ENCODE measurements at regions of chr3 and their contacts with region 1.

Region 1: GRCh38 chr3:98556164-98557130 is 24.7 kb downstream of the GPR15 start:
- DNase-seq: peak; percentile 81
- H3K4me3 Mint-ChIP-seq: peak overlapping the region; percentile 83
- H3K27ac Mint-ChIP-seq: peak overlapping the region; percentile 98
- H3K4me1 Mint-ChIP-seq: peaks cover 94% of the 10 kb centered on the region
- H3K27me3 Mint-ChIP-seq: no peaks in the 10 kb centered on the region

Region 2: GRCh38 chr3:97981886-97982285 is 574.6 kb before region 1 on chr3:
- intact Hi-C with region 1: loop called (anchors 1 kb)
- DNase-seq: peak; percentile 43
- H3K4me3 Mint-ChIP-seq: peak overlapping the region; percentile 9
- H3K27ac Mint-ChIP-seq: peak overlapping the region; percentile 89
- H3K4me1 Mint-ChIP-seq: peaks cover 49% of the 10 kb centered on the region
- H3K27me3 Mint-ChIP-seq: no peaks in the 10 kb centered on the region

Region 3: DNA sequence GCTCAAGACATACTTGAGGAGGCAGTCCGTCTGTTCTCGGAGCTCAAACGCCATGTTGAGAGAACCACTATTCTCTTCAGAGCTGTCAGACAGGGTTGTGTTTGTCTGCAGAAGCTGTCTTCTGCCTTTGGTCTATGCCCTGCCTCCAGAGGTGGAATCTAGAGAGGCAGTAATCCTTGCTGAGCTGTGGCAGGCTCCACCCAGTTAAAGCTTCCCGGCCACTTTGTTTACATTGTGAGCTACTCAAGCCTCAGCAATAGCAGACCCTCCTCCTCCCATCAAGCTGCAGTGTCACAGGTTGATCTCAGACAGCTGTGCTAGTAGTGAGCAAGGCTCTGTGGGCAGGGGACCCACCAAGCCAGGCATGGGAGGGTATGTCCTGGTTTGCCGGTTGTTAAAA is 460.6 kb before region 1 on chr3:
- intact Hi-C with region 1: no loop called
- DNase-seq: no peak
- H3K4me3 Mint-ChIP-seq: no peak overlapping the region
- H3K27ac Mint-ChIP-seq: no peak overlapping the region
- H3K4me1 Mint-ChIP-seq: no peaks in the 10 kb centered on the region
- H3K27me3 Mint-ChIP-seq: peaks cover under 1% of the 10 kb centered on the region

Region 4: GRCh38 chr3:98540346-98540745 is 16.1 kb before region 1 on chr3:
- intact Hi-C with region 1: loop called (anchors 1 kb)
- DNase-seq: no peak
- H3K4me3 Mint-ChIP-seq: peak overlapping the region; percentile 41
- H3K27ac Mint-ChIP-seq: peak overlapping the region; percentile 76
- H3K4me1 Mint-ChIP-seq: peaks cover 75% of the 10 kb centered on the region
- H3K27me3 Mint-ChIP-seq: no peaks in the 10 kb centered on the region

Region 5: GRCh38 chr3:98545940-98546339 is 10.5 kb before region 1 on chr3:
- intact Hi-C with region 1: loop called (anchors 1 kb)
- DNase-seq: no peak
- H3K4me3 Mint-ChIP-seq: peak overlapping the region; percentile 70
- H3K27ac Mint-ChIP-seq: peak overlapping the region; percentile 94
- H3K4me1 Mint-ChIP-seq: peaks cover 73% of the 10 kb centered on the region
- H3K27me3 Mint-ChIP-seq: no peaks in the 10 kb centered on the region

Region 6: GRCh38 chr3:98573181-98573728 is 16.8 kb after region 1 on chr3:
- intact Hi-C with region 1: loop called (anchors 2 kb)
- DNase-seq: no peak
- H3K4me3 Mint-ChIP-seq: peak overlapping the region; percentile 46
- H3K27ac Mint-ChIP-seq: peak overlapping the region; percentile 61
- H3K4me1 Mint-ChIP-seq: peaks cover 64% of the 10 kb centered on the region
- H3K27me3 Mint-ChIP-seq: no peaks in the 10 kb centered on the region

Measured in activated T-helper 1 cell treated with anti-CD3 and anti-CD28 coated beads, Interleukin-12 subunit alpha, Interleukin-12 subunit beta, Interleukin-2, Interleukin-4 antibody, amounts not matched to agents 30 ng/mL and 10 ng/mL and 1 ng/mL, durations not matched to agents 14 hours and 24 hours and 36 hours (primary cell).